Posterior vena cava (tissue), 2 donors: ENCODE measurements at regions of chr4 and their contacts with region 1.

Region 1: DNA sequence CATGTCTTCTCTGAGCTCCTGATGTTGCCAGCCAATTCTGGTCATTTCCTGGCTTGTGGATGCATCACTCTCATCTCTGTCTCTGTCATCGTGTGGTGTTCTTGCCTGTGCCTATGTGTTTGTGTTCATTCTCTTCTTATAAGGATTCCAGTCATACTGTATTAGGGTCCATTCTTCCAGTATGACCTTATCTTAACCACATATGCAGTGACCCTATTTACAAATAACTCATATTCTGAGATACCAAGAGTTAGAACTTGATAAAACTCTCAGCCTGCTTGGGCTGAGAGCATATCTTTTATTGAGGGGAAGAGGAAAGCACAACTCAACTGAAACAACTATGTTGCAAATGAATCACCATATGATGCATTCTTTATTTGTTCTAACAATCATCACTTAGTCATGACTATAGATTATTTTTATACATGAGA is 189.0 kb upstream of the ANXA10 start:
- DNase-seq: no peak

Region 2: DNA sequence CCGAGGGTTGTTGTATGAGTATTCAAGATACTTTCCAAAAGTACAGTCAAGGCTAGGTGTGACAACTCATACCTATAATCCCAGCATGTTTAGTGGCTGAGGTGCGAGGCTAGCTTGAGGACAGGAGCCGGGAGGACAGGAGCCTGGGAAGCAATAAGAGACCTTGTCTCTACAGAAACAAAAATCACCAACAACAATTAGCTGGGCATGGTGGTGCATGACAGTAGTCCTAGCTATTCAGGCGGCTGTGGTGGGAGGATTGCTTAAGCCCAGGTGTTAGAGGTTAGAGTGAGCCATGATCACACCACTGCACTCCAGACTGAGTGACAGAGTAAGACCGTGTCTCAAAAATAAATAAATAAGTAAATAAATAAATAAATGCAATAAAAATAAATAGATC is 1938.7 kb before region 1 on chr4:
- intact Hi-C with region 1: loop called in 1 of 2 experiments (anchors 5 kb)
- DNase-seq: no peak